ENCODE measurements at regions of chr16 and their contacts with region 1.

Region 1: DNA sequence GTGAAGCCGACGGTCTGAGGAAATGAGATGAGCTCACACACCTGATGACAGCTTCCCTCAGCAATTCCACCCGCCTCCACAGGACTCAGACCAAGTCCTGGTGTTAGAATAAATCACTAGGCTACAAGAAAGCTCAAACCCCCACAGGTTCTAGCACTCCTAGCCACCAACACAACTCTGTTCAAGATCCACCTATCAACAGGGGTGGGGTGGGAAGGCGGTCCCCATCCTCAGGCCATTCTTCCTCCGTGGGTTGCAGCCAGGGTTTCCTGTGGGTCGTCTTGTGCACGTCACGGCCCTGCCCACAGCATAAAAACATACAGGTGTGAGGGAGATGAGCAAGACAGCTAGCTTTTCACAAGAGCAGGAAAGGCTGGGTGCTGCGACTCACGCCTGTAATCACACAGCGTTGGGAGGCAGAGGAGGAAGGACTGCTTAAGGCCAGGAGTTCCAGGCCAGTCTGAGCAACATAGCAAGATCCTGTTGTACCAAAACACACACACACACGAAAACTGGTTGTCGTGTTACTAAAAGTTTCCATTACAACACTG is 81.1 kb downstream of the ANKRD11 start:
- DNase-seq: peak; percentile 60
- H3K4me3 Mint-ChIP-seq: peak overlapping the region; percentile 58
- H3K27ac Mint-ChIP-seq: peak overlapping the region; percentile 94
- H3K4me1 Mint-ChIP-seq: peaks cover 72% of the 10 kb centered on the region
- H3K27me3 Mint-ChIP-seq: no peaks in the 10 kb centered on the region

Region 2: GRCh38 chr16:89350701-89351380 is 58.4 kb before region 1 on chr16:
- intact Hi-C with region 1: loop called (anchors 1 kb)
- DNase-seq: no peak
- H3K4me3 Mint-ChIP-seq: peak overlapping the region; percentile 25
- H3K27ac Mint-ChIP-seq: peak overlapping the region; percentile 85
- H3K4me1 Mint-ChIP-seq: peaks cover 68% of the 10 kb centered on the region
- H3K27me3 Mint-ChIP-seq: no peaks in the 10 kb centered on the region

Region 3: DNA sequence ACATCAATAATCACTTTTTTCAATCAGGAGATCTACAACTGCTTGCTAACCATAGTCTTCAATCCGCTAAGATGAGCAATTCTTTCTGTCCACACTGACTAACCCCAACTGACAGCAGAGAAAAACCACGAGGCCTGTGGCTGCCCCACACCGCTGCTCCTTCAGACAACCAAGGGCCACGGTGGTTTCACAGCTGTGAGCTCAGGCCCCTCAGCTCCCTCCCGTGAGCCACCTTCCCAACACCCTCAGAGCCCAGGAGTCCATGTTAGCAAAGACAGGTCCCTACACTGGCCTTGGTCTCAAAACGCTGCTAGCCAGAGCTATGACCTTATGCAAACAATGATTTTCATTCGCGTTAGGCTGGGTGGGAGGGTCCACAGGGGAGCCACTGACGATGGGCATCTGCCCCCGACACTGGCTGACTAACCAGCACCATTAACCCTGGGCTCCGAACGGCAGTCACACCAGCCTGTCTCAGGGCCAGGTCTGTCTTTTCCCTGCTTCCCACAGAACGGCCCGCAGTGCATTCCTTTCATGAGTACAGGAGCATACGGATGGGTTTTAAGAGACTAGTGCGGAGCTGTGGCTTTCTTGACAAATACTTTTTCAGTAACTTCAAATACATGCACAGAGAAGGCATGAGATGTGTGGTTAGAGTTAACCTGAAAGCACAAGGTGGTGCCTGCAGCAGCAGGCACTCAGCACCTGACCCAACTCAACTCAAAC is 13.8 kb after region 1 on chr16:
- intact Hi-C with region 1: loop called (anchors 1 kb)
- DNase-seq: peak; percentile 46
- H3K4me3 Mint-ChIP-seq: peak overlapping the region; percentile 53
- H3K27ac Mint-ChIP-seq: peak overlapping the region; percentile 92
- H3K4me1 Mint-ChIP-seq: peaks cover 64% of the 10 kb centered on the region
- H3K27me3 Mint-ChIP-seq: no peaks in the 10 kb centered on the region

Region 4: DNA sequence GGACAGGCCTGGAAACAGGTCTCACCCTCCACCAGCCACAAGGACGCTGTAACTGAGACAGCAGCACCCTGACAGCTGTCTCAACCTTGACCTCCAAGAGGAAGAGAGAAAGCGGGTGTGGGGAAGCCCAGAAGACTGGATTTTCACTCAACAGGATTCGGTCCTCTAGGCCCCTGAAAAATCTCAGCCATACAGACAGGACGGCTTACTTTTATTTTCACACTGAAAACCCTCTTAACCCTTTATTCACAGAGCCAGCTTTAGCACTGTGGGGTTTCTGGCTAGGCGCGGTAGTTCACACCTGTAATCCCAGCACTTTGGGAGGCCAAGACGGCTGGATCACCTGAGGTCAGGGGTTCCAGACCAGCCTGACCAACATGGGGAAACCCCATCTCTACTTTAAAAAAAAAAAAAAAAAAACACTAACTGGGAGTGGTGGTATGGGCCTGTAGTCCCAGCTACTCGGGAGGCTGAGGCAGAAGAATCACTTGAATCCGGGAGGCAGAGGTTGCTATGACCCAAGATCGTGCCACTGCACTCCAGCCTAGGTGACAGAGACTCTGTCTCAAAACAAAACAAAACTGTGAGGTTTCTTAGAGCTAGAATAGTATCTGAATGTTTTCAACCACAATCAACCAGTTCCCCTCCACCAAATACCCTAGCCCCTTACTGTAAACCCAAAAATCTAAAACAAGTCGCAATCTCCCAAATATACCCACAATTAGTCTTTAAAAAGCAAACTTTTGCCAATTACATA is 75.9 kb after region 1 on chr16:
- intact Hi-C with region 1: loop called (anchors 1 kb)
- DNase-seq: no peak
- H3K4me3 Mint-ChIP-seq: peak overlapping the region; percentile 83
- H3K27ac Mint-ChIP-seq: peak overlapping the region; percentile 91
- H3K4me1 Mint-ChIP-seq: peaks cover 87% of the 10 kb centered on the region
- H3K27me3 Mint-ChIP-seq: no peaks in the 10 kb centered on the region